ENCODE measurements at regions of chr7 and their contacts with region 1.

Region 1: DNA sequence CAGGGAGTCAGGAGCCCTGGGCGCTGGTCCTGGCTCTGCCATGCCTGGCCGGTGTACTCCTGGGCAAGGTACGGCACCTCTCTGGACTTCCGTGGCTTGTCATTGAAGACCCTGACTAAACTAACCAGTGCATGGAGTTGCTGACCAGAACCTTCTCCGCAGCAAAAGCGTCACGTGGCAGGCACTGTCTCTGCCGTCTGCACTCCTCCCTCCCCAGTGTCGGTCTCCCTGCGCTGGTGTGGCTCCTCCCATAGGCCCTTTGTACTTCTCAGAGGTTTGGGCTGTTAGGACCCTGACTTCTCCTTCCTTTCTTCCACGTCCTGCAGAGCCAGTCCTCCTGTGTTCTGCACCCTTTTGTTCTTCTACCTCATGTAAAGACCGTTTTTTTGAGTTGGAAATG is 100.6 kb upstream of the CREB5 start:
- DNase-seq: no peak
- ATAC-seq: no peak
- H3K4me3 ChIP-seq: no peak overlapping the region
- H3K27ac ChIP-seq: no peak overlapping the region
- H3K4me1 ChIP-seq: peaks cover 0 to 9% (median 0%) of the 10 kb centered on the region in 12 donors
- H3K27me3 ChIP-seq: peaks cover 0 to 46% (median 2%) of the 10 kb centered on the region in 9 donors
- CTCF ChIP-seq: no peak
- POLR2A ChIP-seq: no peak

Region 2: DNA sequence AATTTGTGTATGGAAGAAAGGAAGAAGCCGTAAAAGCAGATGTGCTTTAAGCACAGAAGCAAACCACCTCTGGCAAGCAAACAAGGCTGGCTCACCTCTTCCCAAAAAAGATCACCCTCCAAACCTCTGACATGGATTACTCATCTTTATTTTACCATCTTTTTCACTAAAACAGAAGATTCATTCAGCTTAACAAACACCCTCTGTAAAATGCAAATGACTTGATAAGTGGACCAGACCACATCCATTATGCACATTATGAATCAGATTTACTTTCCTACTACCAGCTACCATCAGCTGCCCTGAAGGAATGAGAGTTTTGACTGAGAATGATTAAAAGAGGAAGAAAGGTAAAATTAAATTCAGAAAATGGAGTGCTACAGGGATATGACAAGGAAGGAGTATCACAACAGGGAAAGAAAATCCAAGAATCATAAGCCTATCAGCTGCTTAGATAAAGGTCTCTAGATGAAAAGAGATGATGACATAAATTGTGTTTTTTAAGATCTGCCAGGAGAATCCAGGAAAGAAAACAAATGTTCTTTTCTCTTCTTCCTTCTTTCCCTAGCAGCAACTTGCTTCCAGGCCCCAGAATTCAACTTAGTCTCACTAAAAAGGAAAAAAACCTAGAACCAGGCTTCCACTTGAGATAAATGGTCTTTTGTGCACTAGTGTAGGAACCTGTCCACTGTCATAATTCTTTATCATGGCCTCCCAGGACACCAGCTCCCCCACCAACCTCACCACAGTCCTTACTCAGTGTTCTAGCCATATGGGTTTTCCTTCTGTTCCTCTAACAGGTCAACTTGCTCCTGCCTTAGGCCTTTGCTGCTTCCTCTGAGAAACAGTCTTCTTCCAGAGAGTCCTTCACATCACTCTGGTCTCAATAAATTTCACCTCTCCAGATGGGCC is 178.5 kb before region 1 on chr7:
- intact Hi-C with region 1: no loop called
- DNase-seq: no peak
- ATAC-seq: no peak
- H3K4me3 ChIP-seq: no peak overlapping the region
- H3K27ac ChIP-seq: peak overlapping the region in 1 of 12 donors; percentile 44
- H3K4me1 ChIP-seq: peaks cover 0 to 50% (median 25%) of the 10 kb centered on the region in 12 donors
- H3K27me3 ChIP-seq: no peaks in the 10 kb centered on the region
- CTCF ChIP-seq: no peak
- POLR2A ChIP-seq: no peak

Region 3: GRCh38 chr7:28383975-28384374 is 72.3 kb after region 1 on chr7:
- intact Hi-C with region 1: loop called in 2 of 10 experiments (anchors 5 to 10 kb)
- DNase-seq: no peak
- ATAC-seq: no peak
- H3K4me3 ChIP-seq: no peak overlapping the region
- H3K27ac ChIP-seq: no peak overlapping the region
- H3K4me1 ChIP-seq: peaks cover 0 to 6% (median 0%) of the 10 kb centered on the region in 12 donors
- H3K27me3 ChIP-seq: no peaks in the 10 kb centered on the region
- CTCF ChIP-seq: no peak
- POLR2A ChIP-seq: no peak